ENCODE measurements at regions of chr3 and their contacts with region 1.

Region 1: GRCh38 chr3:126389112-126389793 is 5.5 kb upstream of the CFAP100 start:
- DNase-seq: peak; percentile 91 to 93
- H3K4me3 ChIP-seq: peak overlapping the region; percentile 40
- H3K4me3 Mint-ChIP-seq: peak overlapping the region; percentile 84
- H3K27ac Mint-ChIP-seq: peak overlapping the region; percentile 90
- H3K4me1 ChIP-seq: no peaks in the 10 kb centered on the region
- H3K4me1 Mint-ChIP-seq: peaks cover 6% of the 10 kb centered on the region
- H3K27me3 ChIP-seq: no peaks in the 10 kb centered on the region
- H3K27me3 Mint-ChIP-seq: peaks cover 9% of the 10 kb centered on the region
- CTCF ChIP-seq: peak; percentile 92 to 93

Region 2: DNA sequence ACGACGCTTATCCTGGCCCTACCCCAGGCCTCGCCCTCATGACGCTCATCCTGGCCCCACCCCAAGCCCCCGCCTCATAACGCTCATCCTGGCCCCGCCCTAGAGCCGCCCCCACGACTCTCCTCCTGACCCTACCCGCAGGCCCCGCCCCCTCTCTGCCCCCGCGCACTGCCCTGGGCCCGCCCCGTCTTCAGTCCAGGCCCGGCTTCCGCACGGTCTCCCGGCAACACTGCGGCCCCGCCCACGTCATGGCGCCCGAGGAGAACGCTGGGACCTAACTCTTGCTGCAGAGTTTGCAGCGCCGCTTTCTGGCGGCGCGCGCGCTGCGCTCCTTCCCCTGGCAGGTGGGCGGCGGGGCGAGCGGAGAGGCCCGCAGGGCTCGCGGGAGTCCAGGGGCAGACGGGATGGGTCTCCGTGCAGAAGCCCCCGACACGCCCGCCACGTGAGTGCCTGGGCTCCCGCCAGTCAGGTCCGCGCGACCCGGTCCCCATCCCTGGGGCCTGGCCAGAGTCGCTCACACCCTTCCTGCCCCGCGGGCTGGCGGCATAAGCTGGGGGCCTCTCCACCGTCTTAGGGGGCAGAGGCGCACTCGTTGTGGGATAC is 472.8 kb before region 1 on chr3:
- CTCF ChIA-PET with region 1: no interaction called
- POLR2A ChIA-PET with region 1: no interaction called
- intact Hi-C with region 1: loop called (anchors 10 kb)
- DNase-seq: peak in 1 of 2 experiments; percentile 97
- H3K4me3 ChIP-seq: peak overlapping the region; percentile 82
- H3K4me3 Mint-ChIP-seq: peak overlapping the region; percentile 69
- H3K27ac Mint-ChIP-seq: peak overlapping the region; percentile 73
- H3K4me1 ChIP-seq: no peaks in the 10 kb centered on the region
- H3K4me1 Mint-ChIP-seq: no peaks in the 10 kb centered on the region
- H3K27me3 ChIP-seq: no peaks in the 10 kb centered on the region
- H3K27me3 Mint-ChIP-seq: no peaks in the 10 kb centered on the region
- CTCF ChIP-seq: peak in 1 of 2 experiments; percentile 30

Region 3: GRCh38 chr3:126212602-126213378 is 176.5 kb before region 1 on chr3:
- CTCF ChIA-PET with region 1: interaction called, 10 read pairs
- POLR2A ChIA-PET with region 1: no interaction called
- intact Hi-C with region 1: no loop called
- DNase-seq: peak; percentile 49 to 62
- H3K4me3 ChIP-seq: peak overlapping the region; percentile 48
- H3K4me3 Mint-ChIP-seq: peak overlapping the region; percentile 81
- H3K27ac Mint-ChIP-seq: peak overlapping the region; percentile 54
- H3K4me1 ChIP-seq: peaks cover 3% of the 10 kb centered on the region; the same call in 1 of the 2 replicates
- H3K4me1 Mint-ChIP-seq: peaks cover 13% of the 10 kb centered on the region
- H3K27me3 ChIP-seq: no peaks in the 10 kb centered on the region
- H3K27me3 Mint-ChIP-seq: peaks cover 2% of the 10 kb centered on the region
- CTCF ChIP-seq: peak; percentile 15 to 17

Region 4: GRCh38 chr3:126259411-126260391 is 129.6 kb before region 1 on chr3:
- CTCF ChIA-PET with region 1: no interaction called
- POLR2A ChIA-PET with region 1: no interaction called
- intact Hi-C with region 1: loop called (anchors 1 kb)
- DNase-seq: peak in 1 of 2 experiments; percentile 63
- H3K4me3 ChIP-seq: no peak overlapping the region
- H3K4me3 Mint-ChIP-seq: no peak overlapping the region
- H3K27ac Mint-ChIP-seq: no peak overlapping the region
- H3K4me1 ChIP-seq: peaks cover 17% of the 10 kb centered on the region
- H3K4me1 Mint-ChIP-seq: peaks cover 20% of the 10 kb centered on the region
- H3K27me3 ChIP-seq: no peaks in the 10 kb centered on the region
- H3K27me3 Mint-ChIP-seq: no peaks in the 10 kb centered on the region
- CTCF ChIP-seq: peak; percentile 39 to 64

Region 5: GRCh38 chr3:126445506-126445905 is 56.3 kb after region 1 on chr3:
- CTCF ChIA-PET with region 1: no interaction called
- POLR2A ChIA-PET with region 1: interaction called, 16 read pairs
- intact Hi-C with region 1: no loop called
- DNase-seq: no peak
- H3K4me3 ChIP-seq: no peak overlapping the region
- H3K4me3 Mint-ChIP-seq: no peak overlapping the region
- H3K27ac Mint-ChIP-seq: no peak overlapping the region
- H3K4me1 ChIP-seq: peaks cover 10% of the 10 kb centered on the region
- H3K4me1 Mint-ChIP-seq: peaks cover 8% of the 10 kb centered on the region
- H3K27me3 ChIP-seq: no peaks in the 10 kb centered on the region
- H3K27me3 Mint-ChIP-seq: no peaks in the 10 kb centered on the region
- CTCF ChIP-seq: no peak